ENCODE measurements at regions of chr5 and their contacts with region 1.

Region 1: GRCh38 chr5:58849921-58850667 is 267.2 kb downstream of the RAB3C start:
- DNase-seq: no peak
- ATAC-seq: peak; percentile 36
- H3K4me3 Mint-ChIP-seq: no peak overlapping the region
- H3K27ac Mint-ChIP-seq: no peak overlapping the region
- H3K4me1 Mint-ChIP-seq: no peaks in the 10 kb centered on the region
- H3K27me3 Mint-ChIP-seq: peaks cover 10% of the 10 kb centered on the region

Region 2: DNA sequence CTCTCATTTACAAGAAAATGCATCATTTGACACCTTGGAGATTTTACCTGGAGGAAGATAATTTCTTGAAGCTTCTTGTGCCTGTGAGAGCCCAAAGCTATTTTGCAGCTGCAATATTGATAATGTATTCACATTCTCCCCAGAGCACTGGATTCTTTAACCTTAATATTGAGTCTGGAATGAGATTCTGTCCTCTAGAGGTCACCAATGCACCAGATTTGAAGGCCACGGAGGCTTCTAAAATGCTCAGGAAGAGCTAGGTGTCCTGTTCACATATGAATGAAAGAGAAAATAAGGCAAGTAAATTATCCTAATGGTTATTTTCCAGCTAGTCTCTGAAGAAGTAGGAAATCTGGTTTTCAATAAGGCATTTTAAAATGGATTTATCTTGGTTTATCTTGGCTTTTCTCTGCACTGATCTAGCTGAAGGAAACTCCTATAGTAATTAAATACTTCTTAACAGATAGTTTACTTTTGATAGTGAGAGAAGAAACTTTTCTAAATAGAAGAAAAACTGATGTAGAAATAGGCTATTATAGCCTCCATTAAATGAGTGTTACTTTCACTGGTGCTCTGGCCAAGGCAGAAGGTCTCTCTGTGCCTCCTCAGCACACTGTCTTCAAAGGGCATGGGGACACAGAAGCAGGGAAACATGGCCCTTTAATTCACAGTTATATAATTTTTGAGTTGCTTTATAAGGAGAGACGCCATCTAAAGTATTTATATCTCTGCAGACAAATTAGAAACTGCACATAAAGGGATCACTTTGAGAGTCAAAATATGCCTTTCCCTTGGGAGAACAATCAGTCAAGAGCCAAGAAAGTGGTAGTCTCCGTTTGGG is 1070.5 kb before region 1 on chr5:
- CTCF ChIA-PET with region 1: interaction called, 3 read pairs
- POLR2A ChIA-PET with region 1: no interaction called
- intact Hi-C with region 1: loop called in 1 of 2 experiments (anchors 10 kb)
- DNase-seq: peak; percentile 28
- ATAC-seq: no peak
- H3K4me3 Mint-ChIP-seq: no peak overlapping the region
- H3K27ac Mint-ChIP-seq: no peak overlapping the region
- H3K4me1 Mint-ChIP-seq: no peaks in the 10 kb centered on the region
- H3K27me3 Mint-ChIP-seq: peaks cover 4% of the 10 kb centered on the region

Region 3: GRCh38 chr5:58477760-58478376 is 372.2 kb before region 1 on chr5:
- CTCF ChIA-PET with region 1: interaction called, 12 read pairs
- POLR2A ChIA-PET with region 1: no interaction called
- intact Hi-C with region 1: loop called (anchors 1 to 5 kb)
- DNase-seq: no peak
- ATAC-seq: no peak
- H3K4me3 Mint-ChIP-seq: no peak overlapping the region
- H3K27ac Mint-ChIP-seq: no peak overlapping the region
- H3K4me1 Mint-ChIP-seq: no peaks in the 10 kb centered on the region
- H3K27me3 Mint-ChIP-seq: peaks cover 4% of the 10 kb centered on the region

Region 4: GRCh38 chr5:58498340-58498942 is 351.7 kb before region 1 on chr5:
- CTCF ChIA-PET with region 1: interaction called, 9 read pairs
- POLR2A ChIA-PET with region 1: no interaction called
- intact Hi-C with region 1: loop called (anchors 1 to 5 kb)
- DNase-seq: no peak
- ATAC-seq: no peak
- H3K4me3 Mint-ChIP-seq: no peak overlapping the region
- H3K27ac Mint-ChIP-seq: no peak overlapping the region
- H3K4me1 Mint-ChIP-seq: peaks cover 3% of the 10 kb centered on the region
- H3K27me3 Mint-ChIP-seq: peaks cover 6% of the 10 kb centered on the region

Region 5: GRCh38 chr5:58816181-58816731 is 33.8 kb before region 1 on chr5:
- CTCF ChIA-PET with region 1: interaction called, 12 read pairs
- POLR2A ChIA-PET with region 1: no interaction called
- intact Hi-C with region 1: no loop called
- DNase-seq: no peak
- ATAC-seq: no peak
- H3K4me3 Mint-ChIP-seq: no peak overlapping the region
- H3K27ac Mint-ChIP-seq: no peak overlapping the region
- H3K4me1 Mint-ChIP-seq: no peaks in the 10 kb centered on the region
- H3K27me3 Mint-ChIP-seq: no peaks in the 10 kb centered on the region